Left colon (tissue), 2 donors: ENCODE measurements at regions of chr16 and their contacts with region 1.

Region 1: DNA sequence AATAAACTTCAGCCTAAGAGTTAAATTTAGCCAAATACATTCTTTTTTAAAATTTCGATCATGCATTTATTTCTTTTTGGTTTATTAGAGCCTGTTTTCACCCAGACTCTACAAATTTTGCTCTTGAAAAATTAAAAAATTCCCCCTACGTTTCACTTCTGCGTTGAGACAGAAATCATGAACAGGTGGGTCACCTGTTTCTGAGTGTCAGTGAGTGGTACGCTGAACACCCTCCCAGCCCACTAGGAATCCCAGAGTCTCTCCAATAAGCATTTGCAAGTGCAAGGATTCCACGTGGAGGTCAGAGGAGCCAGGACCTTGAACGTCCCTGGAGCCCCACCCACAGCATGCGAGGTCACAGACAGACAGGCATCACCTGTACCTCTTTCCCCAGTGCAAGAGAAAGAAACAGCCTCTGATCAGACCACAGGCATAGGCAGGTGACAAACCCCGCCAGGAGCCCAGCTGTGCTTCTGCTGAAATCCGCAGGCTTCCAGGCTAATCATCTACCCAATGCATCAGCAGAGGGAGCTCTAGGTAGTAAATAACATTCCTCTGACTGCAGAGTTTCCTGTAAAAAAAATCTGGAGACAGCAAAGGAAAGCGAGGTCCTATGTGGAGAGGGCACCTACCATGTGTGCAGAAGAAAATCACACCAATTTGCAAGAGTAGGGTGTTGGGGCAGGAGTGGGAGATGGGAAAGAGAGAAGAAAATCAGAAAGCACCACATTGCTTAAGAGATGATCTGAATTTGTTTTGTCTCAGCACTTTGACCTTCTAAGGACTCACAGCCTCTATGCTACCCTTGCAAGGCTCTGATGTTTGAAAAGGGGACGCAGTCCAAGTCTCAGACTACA is 5.9 kb upstream of the XYLT1 start:
- DNase-seq: peak; percentile 56
- ATAC-seq: peak; percentile 83

Region 2: DNA sequence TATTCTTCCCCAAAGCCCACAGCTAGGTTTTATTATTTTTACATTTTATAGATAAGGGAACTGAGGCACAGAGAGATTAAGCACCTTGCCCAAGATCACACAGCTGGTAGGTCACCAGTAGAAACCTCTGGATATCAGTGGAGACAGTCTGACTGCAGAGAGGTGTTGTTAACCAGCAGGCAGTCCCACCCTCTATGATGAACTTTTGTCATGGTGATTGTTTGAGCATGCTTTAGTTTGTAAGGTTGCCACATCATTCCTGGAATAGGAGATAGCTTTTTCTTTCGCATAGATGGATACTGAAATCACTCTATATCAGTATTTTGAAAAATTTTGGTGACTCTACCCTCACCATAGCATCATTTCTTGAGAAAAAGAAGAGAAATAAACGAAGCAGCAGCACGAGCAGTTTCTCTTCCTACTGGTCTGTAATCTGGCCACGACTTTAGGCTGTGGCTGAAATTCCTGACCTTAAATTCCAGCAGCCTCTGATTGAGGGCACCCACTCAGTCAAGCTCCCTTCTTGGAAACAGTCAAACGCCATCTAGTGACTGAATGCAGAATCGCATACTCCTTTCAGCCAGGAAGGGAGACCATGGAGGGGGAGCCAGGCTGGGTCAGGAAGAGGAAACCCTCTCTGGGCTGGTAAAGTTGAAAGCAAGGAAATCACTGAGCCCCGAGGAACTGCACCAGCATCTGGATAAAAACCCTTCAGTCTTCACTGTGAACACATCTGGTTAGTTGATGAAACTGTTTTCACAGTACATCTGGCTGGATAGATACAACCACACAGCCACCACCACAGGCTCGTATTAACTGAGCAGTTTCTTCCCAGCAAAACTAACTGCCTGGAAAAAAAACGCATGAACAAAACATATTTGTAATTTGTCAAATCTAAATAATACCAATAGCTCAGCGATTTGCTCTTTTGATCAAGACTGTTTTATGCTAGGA is 102.6 kb after region 1 on chr16:
- intact Hi-C with region 1: loop called in 1 of 2 experiments (anchors 10 kb)
- DNase-seq: peak; percentile 51 to 54
- ATAC-seq: peak; percentile 81